Activated T-helper 2 cell treated with anti-CD3 and anti-CD28 coated beads, Interferon-gamma antibody, Interleukin-2, Interleukin-4, amounts not matched to agents 10 μg/mL and 5 μg/mL and 100 μg/mL, durations not matched to agents 14 hours and 24 hours and 36 hours (primary cell): ENCODE measurements at regions of chr14 and their contacts with region 1.

Region 1: GRCh38 chr14:80941241-80942182 is at the start of gene CEP128:
- DNase-seq: peak; percentile 79
- H3K4me3 Mint-ChIP-seq: peak within 1 kb of the TSS; percentile 87
- H3K27ac Mint-ChIP-seq: peak within 1 kb of the TSS; percentile 70
- H3K4me1 Mint-ChIP-seq: peaks cover 33% of the 10 kb centered on the region
- H3K27me3 Mint-ChIP-seq: peaks cover 2% of the 10 kb centered on the region
- total RNA-seq, gene CEP128: 18.0 and 20.7 TPM in 2 replicates

Region 2: DNA sequence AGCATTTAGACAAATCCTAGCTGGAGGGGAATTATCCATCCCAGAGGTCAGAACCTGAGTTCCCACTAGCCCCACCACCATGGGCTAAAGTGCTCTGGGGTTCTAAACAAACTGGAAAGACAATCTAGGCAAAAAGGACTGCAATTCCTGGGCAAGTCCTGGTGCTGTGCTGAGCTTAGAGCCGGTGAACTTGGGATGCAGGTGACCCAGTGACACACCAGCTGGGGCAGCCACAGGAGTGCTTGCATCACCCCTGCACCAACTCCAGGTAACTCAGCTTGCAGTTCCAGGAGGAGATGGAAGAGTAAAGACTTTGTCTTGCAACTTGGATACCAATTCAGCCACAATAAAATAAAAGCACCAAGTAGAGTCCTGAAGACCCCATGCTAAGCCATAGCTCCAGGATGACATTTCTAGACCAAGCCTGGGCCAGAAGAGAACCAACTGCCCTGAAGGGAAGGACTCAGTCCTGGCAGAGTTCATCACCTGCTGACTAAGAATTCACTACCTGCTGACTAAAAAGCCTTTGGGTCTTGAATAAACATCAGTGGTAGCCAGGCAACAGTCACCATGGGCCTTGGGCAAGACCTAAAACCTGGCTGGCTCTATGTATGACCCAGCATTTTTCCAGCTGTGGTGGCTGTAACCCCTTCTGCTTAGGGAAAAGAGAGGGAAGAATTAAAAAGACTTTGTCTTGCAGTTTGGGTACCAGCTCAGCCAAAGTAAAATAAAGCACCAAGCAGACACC is 506.8 kb before region 1 on chr14:
- intact Hi-C with region 1: no loop called
- DNase-seq: no peak
- H3K4me3 Mint-ChIP-seq: no peak overlapping the region
- H3K27ac Mint-ChIP-seq: no peak overlapping the region
- H3K4me1 Mint-ChIP-seq: no peaks in the 10 kb centered on the region
- H3K27me3 Mint-ChIP-seq: no peaks in the 10 kb centered on the region

Region 3: GRCh38 chr14:80587075-80587724 is 354.3 kb before region 1 on chr14:
- intact Hi-C with region 1: loop called (anchors 1 kb)
- DNase-seq: no peak
- H3K4me3 Mint-ChIP-seq: no peak overlapping the region
- H3K27ac Mint-ChIP-seq: peak overlapping the region; percentile 51
- H3K4me1 Mint-ChIP-seq: peaks cover 14% of the 10 kb centered on the region
- H3K27me3 Mint-ChIP-seq: peaks cover 6% of the 10 kb centered on the region

Region 4: DNA sequence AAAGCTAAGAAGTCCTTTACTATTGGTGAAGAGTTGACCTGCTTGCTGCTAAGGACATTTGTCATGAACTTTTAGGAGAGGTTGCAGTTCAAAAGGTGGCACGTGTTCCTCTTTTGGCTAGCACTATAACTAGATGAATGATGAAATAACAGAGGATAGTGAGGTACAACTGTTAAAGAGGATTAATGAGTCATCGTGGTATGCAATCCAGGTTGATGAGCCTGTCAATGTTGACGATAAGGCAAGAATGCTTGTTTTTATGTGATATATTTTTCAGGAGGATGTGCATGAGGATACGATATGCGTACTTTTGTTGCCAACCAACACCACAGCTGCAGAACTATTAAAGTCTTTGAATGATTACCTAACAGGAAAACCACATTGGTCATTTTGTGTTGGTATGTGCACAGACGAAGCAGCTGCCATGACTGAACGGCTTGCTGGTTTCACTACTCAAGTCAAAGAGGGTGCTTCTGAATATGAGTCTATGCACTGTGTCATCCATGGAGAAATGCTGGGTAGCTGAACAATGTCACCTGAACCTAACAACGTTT is 10.6 kb before region 1 on chr14:
- intact Hi-C with region 1: loop called (anchors 1 kb)
- DNase-seq: peak; percentile 58
- H3K4me3 Mint-ChIP-seq: peak overlapping the region; percentile 52
- H3K27ac Mint-ChIP-seq: peak overlapping the region; percentile 79
- H3K4me1 Mint-ChIP-seq: peaks cover 39% of the 10 kb centered on the region
- H3K27me3 Mint-ChIP-seq: no peaks in the 10 kb centered on the region

Region 5: DNA sequence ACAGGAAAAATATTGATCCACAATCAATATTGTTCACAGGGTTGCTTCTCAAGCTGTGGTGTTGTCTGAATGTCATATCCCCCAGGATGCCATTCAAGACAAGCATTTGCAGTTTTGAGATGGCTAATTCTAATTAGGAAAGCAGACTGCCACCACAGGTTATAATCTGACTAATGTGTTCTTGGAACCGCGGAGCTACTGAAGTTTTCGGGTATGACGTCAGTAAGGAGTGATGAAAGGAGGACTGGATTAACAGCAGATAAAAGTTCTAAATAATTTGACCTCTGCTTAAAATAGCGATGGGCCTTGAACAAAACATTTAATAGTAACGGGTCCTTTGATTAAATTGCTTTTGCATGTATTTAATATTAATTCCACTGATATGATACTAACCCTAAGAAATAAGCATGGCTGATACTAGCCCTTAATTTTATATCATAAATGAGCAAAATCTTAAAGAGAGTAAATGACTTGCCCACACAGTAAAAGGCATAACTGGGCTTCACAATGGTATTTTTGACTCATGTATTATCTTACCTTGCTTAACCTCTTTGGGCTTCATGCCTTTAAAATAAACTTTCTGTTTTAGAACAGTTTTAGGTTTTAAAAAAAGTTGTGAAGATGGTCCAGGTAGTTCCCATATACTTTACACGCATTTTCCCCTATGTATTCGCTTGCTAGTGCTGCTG is 64.2 kb after region 1 on chr14:
- intact Hi-C with region 1: no loop called
- DNase-seq: no peak
- H3K4me3 Mint-ChIP-seq: no peak overlapping the region
- H3K27ac Mint-ChIP-seq: no peak overlapping the region
- H3K4me1 Mint-ChIP-seq: no peaks in the 10 kb centered on the region
- H3K27me3 Mint-ChIP-seq: peaks cover 15% of the 10 kb centered on the region

Region 6: GRCh38 chr14:81220830-81221578 is 279.5 kb after region 1 on chr14 and contains the start of gene GTF2A1:
- intact Hi-C with region 1: loop called (anchors 1 kb)
- DNase-seq: peak; percentile 95
- H3K4me3 Mint-ChIP-seq: peak within 1 kb of the TSS; percentile 100
- H3K27ac Mint-ChIP-seq: peak within 1 kb of the TSS; percentile 100
- H3K4me1 Mint-ChIP-seq: peaks cover 30% of the 10 kb centered on the region
- H3K27me3 Mint-ChIP-seq: peaks cover 2% of the 10 kb centered on the region
- total RNA-seq, gene GTF2A1: 41.2 and 45.1 TPM in 2 replicates